Cardiac septum (tissue), 1 donor: ENCODE measurements at regions of chrX and their contacts with region 1.

Region 1: GRCh38 chrX:13646154-13646549 is 6.8 kb upstream of the TCEANC start:
- DNase-seq: no peak

Region 2: DNA sequence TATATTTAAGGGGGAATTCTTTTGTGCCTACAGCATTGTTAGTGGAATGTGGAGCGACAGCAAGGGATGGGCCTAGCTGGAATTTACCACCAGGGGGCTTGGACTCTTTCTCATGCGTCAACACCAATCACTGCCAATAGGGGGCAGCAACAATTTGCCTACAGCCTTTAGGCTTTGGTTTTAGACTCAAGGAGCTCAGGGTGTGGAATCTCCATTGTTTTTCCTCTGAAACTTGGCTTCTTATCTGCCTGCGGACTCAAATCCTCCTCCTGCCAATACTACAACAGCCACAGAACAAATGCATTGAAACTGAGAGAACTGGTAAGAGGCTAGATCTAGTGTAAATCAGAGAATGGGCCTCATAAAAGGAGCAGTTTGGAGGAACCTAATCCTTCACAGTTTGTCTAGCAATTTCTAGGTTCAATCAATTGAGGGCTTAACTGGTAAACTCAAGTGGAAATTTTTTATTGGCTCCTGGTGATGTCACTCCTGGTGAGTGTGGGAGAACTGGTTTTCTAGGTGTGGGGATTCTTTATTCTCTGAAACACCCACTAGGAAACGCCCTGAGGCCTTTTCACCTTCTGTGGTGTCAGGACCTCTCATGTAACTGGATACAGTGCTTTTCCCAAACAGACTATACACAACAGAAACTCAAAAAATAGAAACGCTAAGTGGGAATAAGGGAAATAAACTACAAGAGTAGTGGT is 699.2 kb before region 1 on chrX:
- intact Hi-C with region 1: loop called (anchors 10 kb)
- DNase-seq: peak; percentile 79

Region 3: GRCh38 chrX:13506574-13506973 is 139.6 kb before region 1 on chrX:
- intact Hi-C with region 1: loop called (anchors 2 kb)
- DNase-seq: no peak